Activated B cell treated with CpG ODN at 0.5 μM for 24 hours (primary cell): ENCODE measurements at regions of chr13 and their contacts with region 1.

Region 1: DNA sequence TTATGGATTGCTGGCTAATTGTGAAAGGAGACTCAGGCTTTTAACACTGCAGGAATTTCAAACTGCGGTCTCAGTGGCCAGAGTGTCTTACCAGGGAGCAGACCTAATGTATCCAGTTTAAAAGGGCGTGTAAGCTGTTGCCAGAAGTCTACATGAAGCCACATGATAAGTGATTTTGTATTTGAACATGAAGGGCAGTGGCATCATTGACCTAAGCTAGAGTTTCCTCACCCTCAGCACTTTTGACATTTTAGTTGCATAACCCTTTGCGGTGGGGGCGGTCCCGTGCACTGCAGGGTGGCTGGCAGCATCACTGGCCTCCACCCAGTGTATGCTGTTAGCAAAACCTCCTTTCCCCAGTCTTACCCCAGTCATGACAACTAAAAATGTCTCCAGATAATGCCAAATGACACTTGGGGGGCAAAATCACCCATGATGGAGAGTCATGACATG is 23.7 kb upstream of the GPR18 start:
- DNase-seq: peak; percentile 46
- ATAC-seq: peak; percentile 81
- H3K4me3 Mint-ChIP-seq: peak overlapping the region; percentile 75
- H3K27ac Mint-ChIP-seq: peak overlapping the region; percentile 95
- H3K4me1 Mint-ChIP-seq: peaks cover 95% of the 10 kb centered on the region
- H3K27me3 Mint-ChIP-seq: no peaks in the 10 kb centered on the region
- CTCF ChIP-seq: no peak

Region 2: GRCh38 chr13:99228737-99229691 is 52.8 kb before region 1 on chr13:
- CTCF ChIA-PET with region 1: no interaction called
- POLR2A ChIA-PET with region 1: no interaction called
- intact Hi-C with region 1: loop called (anchors 2 kb)
- DNase-seq: no peak
- ATAC-seq: peak; percentile 83
- H3K4me3 Mint-ChIP-seq: peak overlapping the region; percentile 76
- H3K27ac Mint-ChIP-seq: peak overlapping the region; percentile 88
- H3K4me1 Mint-ChIP-seq: peaks cover 87% of the 10 kb centered on the region
- H3K27me3 Mint-ChIP-seq: no peaks in the 10 kb centered on the region
- CTCF ChIP-seq: no peak

Region 3: DNA sequence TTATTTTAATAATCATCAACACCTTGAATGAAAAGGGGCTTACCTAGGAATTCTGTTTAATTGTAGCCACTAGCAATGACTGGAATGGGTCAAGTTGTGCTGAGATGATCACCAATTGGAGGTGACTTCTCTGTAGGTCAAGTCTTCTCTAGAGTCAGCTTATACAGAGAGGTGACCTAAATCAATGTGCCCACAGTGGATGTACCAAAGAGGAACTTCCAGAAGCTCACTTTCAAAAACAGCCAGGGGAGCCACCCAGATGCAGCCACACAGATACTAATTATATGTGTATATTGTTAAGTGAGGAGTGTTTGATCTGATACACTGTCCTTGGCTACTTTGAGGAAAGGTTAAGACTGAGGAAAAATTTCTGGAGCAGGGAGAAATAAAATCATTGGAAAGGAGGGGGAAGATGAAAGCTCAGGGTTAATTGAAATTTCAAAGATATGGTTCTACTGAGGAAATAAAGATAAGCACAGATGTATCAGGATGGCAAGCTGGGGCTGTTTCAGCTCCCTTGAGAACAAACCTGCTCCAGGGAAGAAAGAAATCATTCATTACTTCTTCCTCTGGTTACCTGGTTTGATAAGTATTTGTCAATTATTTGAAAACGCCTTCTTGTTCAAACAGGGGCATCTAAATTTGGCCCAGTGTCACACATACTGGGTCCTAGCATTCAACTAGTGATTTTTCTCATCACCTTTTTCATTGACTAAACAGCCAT is 20.2 kb after region 1 on chr13:
- CTCF ChIA-PET with region 1: interaction called, 9 read pairs
- POLR2A ChIA-PET with region 1: interaction called, 26 read pairs
- intact Hi-C with region 1: loop called (anchors 1 kb)
- DNase-seq: no peak
- ATAC-seq: peak; percentile 56
- H3K4me3 Mint-ChIP-seq: peak overlapping the region; percentile 95
- H3K27ac Mint-ChIP-seq: peak overlapping the region; percentile 93
- H3K4me1 Mint-ChIP-seq: peaks cover 83% of the 10 kb centered on the region
- H3K27me3 Mint-ChIP-seq: no peaks in the 10 kb centered on the region
- CTCF ChIP-seq: no peak

Region 4: DNA sequence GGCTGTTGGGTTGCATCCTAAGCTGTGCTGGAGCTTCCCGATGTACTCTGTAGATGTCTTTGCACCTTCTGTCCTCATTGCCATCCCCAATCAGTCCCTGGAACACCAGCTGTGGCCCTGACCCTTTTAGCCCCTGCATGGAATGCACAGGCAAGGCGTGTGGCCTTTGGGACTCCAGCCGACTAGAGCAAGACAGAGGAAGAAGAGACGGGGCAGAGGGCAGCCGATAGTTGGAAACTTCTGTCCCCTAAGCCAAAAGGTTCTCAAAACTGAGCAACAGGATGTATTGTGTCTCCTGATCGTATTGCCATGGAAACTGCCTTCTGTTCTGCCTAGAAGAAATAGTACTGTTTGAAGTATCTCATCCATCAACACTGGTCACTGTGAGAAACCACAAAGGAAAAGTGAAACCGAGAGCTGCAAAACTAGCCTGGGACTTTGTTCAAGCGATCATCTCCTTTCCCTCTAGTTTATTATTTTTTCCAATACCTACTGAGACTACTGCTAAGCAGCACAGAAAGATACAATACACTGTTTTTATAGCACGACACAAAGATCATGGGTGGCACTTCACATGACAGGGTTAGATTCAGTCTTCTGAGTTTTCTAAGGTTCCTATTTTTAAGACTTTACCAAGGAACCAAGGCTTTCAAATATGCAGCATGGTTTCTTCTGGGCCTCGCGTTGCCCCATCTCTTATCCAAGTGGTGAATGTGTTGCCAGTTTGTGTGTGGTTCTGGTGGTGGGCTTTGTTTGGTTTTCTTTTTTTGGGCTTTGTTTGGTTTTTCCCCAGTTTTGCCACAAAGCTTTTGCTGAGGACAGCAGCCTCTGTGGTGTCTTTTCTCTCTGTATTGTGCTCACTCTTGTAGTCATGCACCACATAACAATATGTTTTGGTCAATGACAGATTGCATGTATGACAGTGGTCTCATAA is 74.6 kb after region 1 on chr13:
- CTCF ChIA-PET with region 1: no interaction called
- POLR2A ChIA-PET with region 1: interaction called, 5 read pairs
- intact Hi-C with region 1: loop called (anchors 1 kb)
- DNase-seq: peak; percentile 40
- ATAC-seq: peak; percentile 49
- H3K4me3 Mint-ChIP-seq: peak overlapping the region; percentile 70
- H3K27ac Mint-ChIP-seq: peak overlapping the region; percentile 94
- H3K4me1 Mint-ChIP-seq: peaks cover 97% of the 10 kb centered on the region
- H3K27me3 Mint-ChIP-seq: no peaks in the 10 kb centered on the region
- CTCF ChIP-seq: no peak

Region 5: GRCh38 chr13:99419591-99420243 is 137.9 kb after region 1 on chr13:
- CTCF ChIA-PET with region 1: no interaction called
- POLR2A ChIA-PET with region 1: interaction called, 7 read pairs
- intact Hi-C with region 1: loop called (anchors 1 kb)
- DNase-seq: no peak
- ATAC-seq: no peak
- H3K4me3 Mint-ChIP-seq: peak overlapping the region; percentile 80
- H3K27ac Mint-ChIP-seq: peak overlapping the region; percentile 96
- H3K4me1 Mint-ChIP-seq: peaks cover 72% of the 10 kb centered on the region
- H3K27me3 Mint-ChIP-seq: no peaks in the 10 kb centered on the region
- CTCF ChIP-seq: no peak

Region 6: DNA sequence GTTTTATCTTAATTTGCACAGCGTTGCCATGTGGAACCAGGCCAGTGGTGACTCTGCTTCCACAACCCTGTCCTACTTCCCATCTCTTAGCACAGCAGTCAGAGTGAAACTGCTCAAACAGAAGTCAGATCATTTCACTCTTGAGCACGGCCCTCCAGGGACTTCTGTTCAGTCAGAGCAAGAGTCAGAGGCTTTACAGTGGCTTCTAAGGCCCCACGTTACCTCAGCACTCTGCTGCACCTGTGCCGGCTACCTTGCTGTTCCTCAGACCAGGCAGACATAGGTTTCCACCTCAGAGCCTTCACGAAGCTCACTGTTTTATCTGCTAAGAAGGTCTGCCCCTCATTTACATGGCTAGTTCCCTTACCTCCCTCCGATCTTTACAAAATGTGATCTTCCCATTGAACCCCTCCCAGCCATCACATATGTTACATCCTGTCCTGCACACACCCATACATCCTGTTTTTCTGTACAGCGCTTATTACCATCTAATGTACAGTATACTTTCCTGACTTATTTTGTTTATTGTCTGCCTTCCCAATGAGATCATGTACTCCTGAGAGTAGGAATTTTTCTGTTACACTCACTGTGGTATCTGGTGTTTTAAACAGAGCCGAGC is 261.1 kb after region 1 on chr13:
- CTCF ChIA-PET with region 1: no interaction called
- POLR2A ChIA-PET with region 1: interaction called, 3 read pairs
- intact Hi-C with region 1: loop called (anchors 2 kb)
- DNase-seq: peak; percentile 61
- ATAC-seq: peak; percentile 94
- H3K4me3 Mint-ChIP-seq: peak overlapping the region; percentile 53
- H3K27ac Mint-ChIP-seq: peak overlapping the region; percentile 84
- H3K4me1 Mint-ChIP-seq: peaks cover 67% of the 10 kb centered on the region
- H3K27me3 Mint-ChIP-seq: no peaks in the 10 kb centered on the region
- CTCF ChIP-seq: no peak